ENCODE measurements at regions of chr20 and their contacts with region 1.

Region 1: DNA sequence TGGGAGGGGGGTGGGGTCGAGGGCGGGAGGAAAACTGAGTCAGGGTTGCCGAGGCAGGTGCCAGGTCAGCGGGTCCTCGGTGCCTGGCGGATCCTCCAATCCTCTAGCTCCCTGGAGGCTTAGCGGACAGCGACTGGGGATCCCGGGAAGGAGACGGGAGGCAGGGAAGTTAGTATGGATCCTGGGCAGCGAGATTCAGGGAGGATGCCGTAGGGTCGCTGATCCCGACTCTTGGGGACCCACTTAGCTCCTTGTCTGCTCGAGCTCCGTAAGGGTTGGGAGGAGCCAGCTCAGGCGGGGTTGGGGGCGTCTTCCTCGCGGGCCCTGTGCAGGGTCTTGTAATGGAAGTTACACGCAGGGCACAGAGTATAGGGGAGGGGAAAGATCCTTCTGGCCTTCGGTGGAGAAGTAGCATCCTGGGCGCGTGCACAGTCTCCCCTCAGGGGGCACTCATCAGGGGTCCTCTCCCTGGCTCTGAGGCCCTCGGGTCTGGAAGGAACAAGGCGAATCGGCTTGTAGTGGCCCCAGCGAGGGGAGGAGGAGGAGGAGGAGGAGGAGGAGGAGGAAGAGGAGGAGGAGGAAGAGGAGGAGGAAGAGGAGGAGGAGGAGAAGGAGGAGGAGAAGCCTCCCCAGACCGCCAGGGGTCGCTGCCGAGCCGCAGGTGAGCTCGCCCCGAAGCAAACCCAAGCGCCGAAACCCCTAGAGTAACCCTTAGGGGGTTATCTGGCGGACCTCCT is 6.4 kb upstream of the SLC12A5 start:
- DNase-seq: no peak
- ATAC-seq: peak; percentile 47

Region 2: GRCh38 chr20:46089417-46090388 is 67.1 kb after region 1 on chr20 and contains the start of gene NCOA5:
- intact Hi-C with region 1: loop called (anchors 5 kb)
- DNase-seq: peak; percentile 97
- ATAC-seq: peak; percentile 97
- total RNA-seq, gene NCOA5: 19.4 TPM

Region 3: GRCh38 chr20:46174469-46175128 is 152.0 kb after region 1 on chr20:
- intact Hi-C with region 1: loop called (anchors 5 kb)
- DNase-seq: peak; percentile 88
- ATAC-seq: peak; percentile 67

Region 4: DNA sequence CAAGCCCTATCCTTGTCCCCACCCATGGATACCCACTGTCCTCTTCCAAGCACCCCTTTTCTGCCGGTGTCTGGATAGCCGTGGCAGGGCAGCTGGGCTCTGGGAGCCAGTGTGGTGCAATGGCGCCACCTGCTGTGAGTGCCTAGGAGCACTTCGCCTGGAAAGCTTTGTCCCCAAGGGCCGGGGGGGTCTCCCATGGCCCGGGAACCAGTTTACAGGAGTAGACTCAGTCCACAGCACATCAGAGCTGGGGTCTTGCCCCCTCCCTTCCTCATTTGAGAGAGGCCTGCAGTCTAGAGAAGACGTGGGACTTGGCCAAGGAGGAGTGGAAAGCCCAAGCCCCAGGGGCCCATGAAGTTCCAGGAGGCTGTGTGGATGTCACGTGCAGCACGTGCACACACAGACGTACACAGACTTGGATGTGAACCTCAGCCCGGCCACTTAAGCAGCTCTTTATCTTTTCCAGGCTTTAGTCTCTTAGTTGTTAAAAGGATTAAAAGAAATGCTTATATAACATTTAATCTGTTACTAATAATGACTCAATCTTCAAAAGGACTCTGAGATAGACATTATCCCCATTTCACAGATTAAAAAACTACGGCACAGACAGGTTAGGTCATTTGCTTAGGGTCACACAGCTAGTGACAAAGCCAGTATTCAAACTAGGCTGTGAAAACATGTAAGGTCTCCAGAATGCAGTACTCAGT is 326.6 kb after region 1 on chr20:
- intact Hi-C with region 1: loop called (anchors 5 kb)
- DNase-seq: peak; percentile 80
- ATAC-seq: peak; percentile 76